Left ventricle myocardium superior (tissue), 1 donor: ENCODE measurements at regions of chr13 and their contacts with region 1.

Region 1: GRCh38 chr13:37752146-37752545 is 117.4 kb downstream of the TRPC4 start:
- DNase-seq: no peak
- ATAC-seq: no peak

Region 2: DNA sequence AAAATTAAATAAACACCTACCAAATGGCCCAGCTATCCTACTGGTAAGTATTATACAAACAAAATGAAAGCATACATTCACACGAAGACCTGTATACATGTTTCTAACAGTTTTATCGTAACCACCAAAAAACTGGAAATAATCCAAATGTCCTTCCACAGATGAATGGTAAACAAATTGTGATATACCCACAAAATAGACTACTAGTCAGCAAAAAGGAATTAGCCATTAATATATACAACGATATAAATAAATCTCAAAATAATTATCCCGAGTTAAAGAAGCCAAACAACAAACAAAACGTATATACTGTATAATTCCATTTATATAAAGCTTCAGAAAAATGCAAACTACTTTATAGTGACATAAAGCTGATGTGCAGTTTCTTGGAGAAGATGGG is 1184.7 kb before region 1 on chr13:
- intact Hi-C with region 1: loop called (anchors 10 kb)
- DNase-seq: no peak
- ATAC-seq: no peak